B cell (primary cell): ENCODE measurements at regions of chr6 and their contacts with region 1.

Region 1: GRCh38 chr6:25556516-25556915 is 95.5 kb upstream of the SCGN start:
- DNase-seq: peak; percentile 75
- ATAC-seq: no peak
- H3K4me3 ChIP-seq: no peak overlapping the region
- H3K4me3 Mint-ChIP-seq: no peak overlapping the region
- H3K27ac ChIP-seq: no peak overlapping the region
- H3K27ac Mint-ChIP-seq: no peak overlapping the region
- H3K4me1 ChIP-seq: peaks cover 4 to 9% of the 10 kb centered on the region in 2 donors
- H3K4me1 Mint-ChIP-seq: peaks cover 11% of the 10 kb centered on the region
- H3K27me3 ChIP-seq: no peaks in the 10 kb centered on the region
- H3K27me3 Mint-ChIP-seq: peaks cover 2% of the 10 kb centered on the region
- CTCF ChIP-seq: peak; percentile 95

Region 2: DNA sequence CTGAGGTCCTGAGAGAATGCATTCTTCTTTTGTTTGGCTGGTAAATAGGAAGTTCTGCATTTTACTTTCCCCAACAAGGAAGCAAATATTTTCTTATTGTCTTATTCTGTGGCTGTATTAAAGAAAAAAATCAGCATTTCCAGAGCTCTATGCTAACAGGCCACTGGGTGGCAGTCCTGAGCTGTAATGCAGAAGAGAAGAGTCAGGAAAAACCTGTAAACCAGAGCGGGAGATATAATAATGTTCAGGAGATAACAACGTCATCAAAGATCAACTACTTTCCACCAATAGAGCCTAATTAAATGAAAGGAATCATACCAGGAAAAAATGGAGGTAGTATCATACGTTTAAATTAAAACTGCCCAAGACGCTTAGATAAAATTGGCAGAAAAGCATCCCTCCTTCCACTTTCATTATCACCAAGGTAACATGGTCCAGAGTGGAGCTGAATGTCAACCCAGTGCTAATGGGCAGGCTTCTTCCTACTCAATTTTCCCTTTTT is 333.0 kb before region 1 on chr6:
- CTCF ChIA-PET with region 1: interaction called, 70 read pairs
- POLR2A ChIA-PET with region 1: no interaction called
- intact Hi-C with region 1: loop called (anchors 1 kb)
- DNase-seq: peak; percentile 74
- ATAC-seq: peak; percentile 49
- H3K4me3 ChIP-seq: peak overlapping the region in 3 of 5 experiments; percentile 1 to 50 (median 24)
- H3K4me3 Mint-ChIP-seq: peak overlapping the region; percentile 42
- H3K27ac ChIP-seq: no peak overlapping the region
- H3K27ac Mint-ChIP-seq: no peak overlapping the region
- H3K4me1 ChIP-seq: peaks cover 0 to 3% of the 10 kb centered on the region in 2 donors
- H3K4me1 Mint-ChIP-seq: peaks cover 7% of the 10 kb centered on the region
- H3K27me3 ChIP-seq: peaks cover 0 to 3% (median 0%) of the 10 kb centered on the region in 4 experiments
- H3K27me3 Mint-ChIP-seq: peaks cover 13% of the 10 kb centered on the region
- CTCF ChIP-seq: peak; percentile 98

Region 3: GRCh38 chr6:25270559-25270958 is 286.0 kb before region 1 on chr6:
- CTCF ChIA-PET with region 1: interaction called, 93 read pairs
- POLR2A ChIA-PET with region 1: no interaction called
- intact Hi-C with region 1: loop called (anchors 1 kb)
- DNase-seq: no peak
- ATAC-seq: no peak
- H3K4me3 ChIP-seq: no peak overlapping the region
- H3K4me3 Mint-ChIP-seq: no peak overlapping the region
- H3K27ac ChIP-seq: no peak overlapping the region
- H3K27ac Mint-ChIP-seq: no peak overlapping the region
- H3K4me1 ChIP-seq: no peaks in the 10 kb centered on the region
- H3K4me1 Mint-ChIP-seq: peaks cover under 1% of the 10 kb centered on the region
- H3K27me3 ChIP-seq: peaks cover 0 to 7% (median 0%) of the 10 kb centered on the region in 4 experiments
- H3K27me3 Mint-ChIP-seq: peaks cover 28% of the 10 kb centered on the region
- CTCF ChIP-seq: no peak

Region 4: DNA sequence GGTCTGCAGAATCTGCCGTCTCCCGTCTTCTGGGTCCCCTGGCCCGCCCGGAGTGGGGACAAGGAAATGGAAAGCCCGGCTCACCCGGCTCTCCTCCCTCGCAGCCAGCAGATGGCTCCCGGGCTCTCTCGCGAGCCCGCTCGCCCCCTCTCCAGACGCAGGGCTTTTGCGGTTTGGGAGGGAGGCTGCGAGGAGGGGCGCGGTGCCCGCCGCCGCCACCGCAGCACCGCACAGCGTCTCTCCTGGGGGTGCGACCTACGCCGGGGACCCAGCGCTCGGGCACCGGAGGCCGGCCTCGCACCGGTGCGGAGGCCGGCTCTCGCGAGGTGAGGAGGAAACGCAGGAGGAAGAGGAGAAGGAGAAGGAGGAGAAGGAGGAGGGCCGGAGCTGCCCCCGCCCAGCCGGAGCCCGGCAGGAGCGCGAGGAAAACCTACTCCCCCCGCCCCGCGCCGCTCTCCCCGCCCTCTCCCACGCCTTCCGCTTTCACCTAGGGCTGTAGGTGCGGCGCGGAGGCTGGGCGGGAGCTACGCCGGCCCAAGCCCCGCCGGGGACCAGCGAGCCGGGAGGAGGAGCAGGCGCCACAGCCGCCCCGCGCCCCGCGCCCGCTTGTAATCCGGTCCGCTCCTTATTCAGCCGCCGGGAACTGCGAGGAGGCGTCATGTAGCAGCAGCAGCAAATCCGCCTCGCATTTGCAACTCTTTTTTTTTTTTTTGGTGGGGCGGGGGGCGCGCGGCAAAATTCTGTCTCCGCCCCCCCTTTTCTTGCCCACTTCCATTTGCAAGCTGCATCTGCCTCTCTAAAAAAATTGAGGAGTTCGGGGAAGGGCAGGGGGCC is 277.4 kb before region 1 on chr6 and contains the start of gene CARMIL1:
- CTCF ChIA-PET with region 1: interaction called, 47 read pairs
- POLR2A ChIA-PET with region 1: no interaction called
- intact Hi-C with region 1: no loop called
- DNase-seq: peak; percentile 79
- ATAC-seq: peak; percentile 82
- H3K4me3 ChIP-seq: peak within 1 kb of the TSS; percentile 61 to 86 (median 83)
- H3K4me3 Mint-ChIP-seq: peak within 1 kb of the TSS; percentile 96
- H3K27ac ChIP-seq: peak within 1 kb of the TSS; percentile 39 to 66
- H3K27ac Mint-ChIP-seq: peak within 1 kb of the TSS; percentile 89
- H3K4me1 ChIP-seq: peaks cover 23 to 30% of the 10 kb centered on the region in 2 donors
- H3K4me1 Mint-ChIP-seq: peaks cover 34% of the 10 kb centered on the region
- H3K27me3 ChIP-seq: no peaks in the 10 kb centered on the region
- H3K27me3 Mint-ChIP-seq: peaks cover 5% of the 10 kb centered on the region
- CTCF ChIP-seq: peak; percentile 53
- total RNA-seq, gene CARMIL1: 7.5 and 9.0 TPM in 2 replicates

Region 5: GRCh38 chr6:25499615-25500235 is 56.8 kb before region 1 on chr6:
- CTCF ChIA-PET with region 1: no interaction called
- POLR2A ChIA-PET with region 1: no interaction called
- intact Hi-C with region 1: no loop called
- DNase-seq: no peak
- ATAC-seq: no peak
- H3K4me3 ChIP-seq: no peak overlapping the region
- H3K4me3 Mint-ChIP-seq: no peak overlapping the region
- H3K27ac ChIP-seq: no peak overlapping the region
- H3K27ac Mint-ChIP-seq: no peak overlapping the region
- H3K4me1 ChIP-seq: no peaks in the 10 kb centered on the region
- H3K4me1 Mint-ChIP-seq: no peaks in the 10 kb centered on the region
- H3K27me3 ChIP-seq: no peaks in the 10 kb centered on the region
- H3K27me3 Mint-ChIP-seq: no peaks in the 10 kb centered on the region
- CTCF ChIP-seq: no peak

Region 6: DNA sequence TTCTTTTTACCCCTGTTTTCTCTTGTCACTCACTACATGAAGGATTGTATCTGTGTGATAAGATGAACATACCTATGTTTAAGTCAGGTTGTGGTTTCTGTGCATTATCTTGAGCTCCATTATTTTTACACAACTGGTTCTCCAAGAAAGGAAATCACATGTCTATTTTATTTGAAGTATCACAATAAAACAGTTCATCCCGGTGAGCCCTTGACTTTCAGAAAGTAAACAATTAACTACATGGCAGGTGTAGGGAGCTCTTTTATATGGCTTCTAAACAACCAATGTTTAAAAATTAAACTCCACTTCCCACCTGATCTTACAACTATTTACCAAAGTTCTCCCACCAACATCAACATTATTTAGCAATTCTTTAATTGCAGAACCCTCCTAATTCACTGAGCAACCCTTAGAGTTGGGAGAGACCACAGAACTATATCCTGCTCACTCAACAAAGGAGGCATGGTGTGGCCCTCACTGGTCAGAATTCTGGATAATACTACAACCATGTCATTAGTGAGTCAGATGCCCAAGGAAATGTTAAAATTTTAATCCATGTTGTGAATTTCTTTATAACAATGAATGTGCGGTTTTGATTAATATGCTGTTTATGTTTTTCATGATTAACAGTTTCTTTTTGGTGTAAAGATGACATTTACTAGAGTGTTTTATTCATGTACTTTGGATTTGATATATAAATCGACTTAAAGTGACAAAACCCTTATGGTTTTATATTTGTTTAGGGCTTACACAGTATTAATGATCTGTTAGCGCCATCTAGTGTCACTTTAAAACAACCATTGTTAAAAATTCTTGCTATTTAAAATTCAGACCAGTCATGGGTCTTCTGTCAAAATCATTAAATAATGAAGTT is 45.5 kb after region 1 on chr6:
- CTCF ChIA-PET with region 1: interaction called, 5 read pairs
- POLR2A ChIA-PET with region 1: no interaction called
- intact Hi-C with region 1: loop called (anchors 1 kb)
- DNase-seq: peak; percentile 62
- ATAC-seq: no peak
- H3K4me3 ChIP-seq: no peak overlapping the region
- H3K4me3 Mint-ChIP-seq: no peak overlapping the region
- H3K27ac ChIP-seq: no peak overlapping the region
- H3K27ac Mint-ChIP-seq: no peak overlapping the region
- H3K4me1 ChIP-seq: no peaks in the 10 kb centered on the region
- H3K4me1 Mint-ChIP-seq: no peaks in the 10 kb centered on the region
- H3K27me3 ChIP-seq: no peaks in the 10 kb centered on the region
- H3K27me3 Mint-ChIP-seq: peaks cover 8% of the 10 kb centered on the region
- CTCF ChIP-seq: peak; percentile 89

Region 7: GRCh38 chr6:25942561-25943147 is 386.1 kb after region 1 on chr6:
- CTCF ChIA-PET with region 1: interaction called, 3 read pairs
- POLR2A ChIA-PET with region 1: no interaction called
- intact Hi-C with region 1: loop called (anchors 1 kb)
- DNase-seq: peak; percentile 65
- ATAC-seq: peak; percentile 47
- H3K4me3 ChIP-seq: no peak overlapping the region
- H3K4me3 Mint-ChIP-seq: no peak overlapping the region
- H3K27ac ChIP-seq: no peak overlapping the region
- H3K27ac Mint-ChIP-seq: no peak overlapping the region
- H3K4me1 ChIP-seq: no peaks in the 10 kb centered on the region
- H3K4me1 Mint-ChIP-seq: peaks cover 10% of the 10 kb centered on the region
- H3K27me3 ChIP-seq: no peaks in the 10 kb centered on the region
- H3K27me3 Mint-ChIP-seq: peaks cover 4% of the 10 kb centered on the region
- CTCF ChIP-seq: peak; percentile 70